ENCODE measurements at regions of chr1 and their contacts with region 1.

Region 1: DNA sequence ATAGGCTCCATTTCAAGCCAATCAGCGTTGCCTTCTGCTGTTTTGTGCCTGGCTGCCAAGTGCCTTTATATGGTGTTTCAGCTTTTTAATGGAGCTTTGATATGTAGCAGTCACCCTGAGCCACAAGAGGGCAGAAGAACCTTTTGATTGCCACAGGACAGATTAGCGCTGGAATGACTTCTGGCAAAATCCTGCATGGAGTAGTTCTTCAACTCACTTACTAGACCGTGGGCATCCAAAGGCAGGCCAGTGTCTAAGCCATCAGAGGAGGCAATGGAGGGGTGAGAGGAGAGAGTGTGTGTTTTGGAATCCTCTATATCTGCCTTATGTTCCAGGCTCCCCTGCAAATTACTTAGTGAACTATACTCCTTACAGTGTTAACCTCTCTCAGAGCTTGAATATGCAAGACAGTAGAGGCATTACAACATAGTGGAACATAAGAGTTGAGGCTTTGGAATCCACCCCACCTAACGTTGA is 56.2 kb downstream of the ST3GAL3 start:
- DNase-seq: peak; percentile 53
- H3K4me3 Mint-ChIP-seq: no peak overlapping the region
- H3K27ac Mint-ChIP-seq: no peak overlapping the region
- H3K4me1 Mint-ChIP-seq: no peaks in the 10 kb centered on the region
- H3K27me3 Mint-ChIP-seq: no peaks in the 10 kb centered on the region

Region 2: GRCh38 chr1:43974443-43975248 is 211.1 kb after region 1 on chr1 and contains the start of gene ATP6V0B:
- CTCF ChIA-PET with region 1: interaction called, 11 read pairs
- POLR2A ChIA-PET with region 1: no interaction called
- intact Hi-C with region 1: no loop called
- DNase-seq: peak; percentile 98
- H3K4me3 Mint-ChIP-seq: peak within 1 kb of the TSS; percentile 83
- H3K27ac Mint-ChIP-seq: peak within 1 kb of the TSS; percentile 89
- H3K4me1 Mint-ChIP-seq: peaks cover 57% of the 10 kb centered on the region
- H3K27me3 Mint-ChIP-seq: no peaks in the 10 kb centered on the region
- total RNA-seq, gene ATP6V0B: 84.8 to 85.1 TPM

Measured in activated CD4-positive, alpha-beta memory T cell treated with anti-CD3 and anti-CD28 coated beads for 36 hours (primary cell).